Uterus (tissue), 4 donors: ENCODE measurements at regions of chr19 and their contacts with region 1.

Region 1: DNA sequence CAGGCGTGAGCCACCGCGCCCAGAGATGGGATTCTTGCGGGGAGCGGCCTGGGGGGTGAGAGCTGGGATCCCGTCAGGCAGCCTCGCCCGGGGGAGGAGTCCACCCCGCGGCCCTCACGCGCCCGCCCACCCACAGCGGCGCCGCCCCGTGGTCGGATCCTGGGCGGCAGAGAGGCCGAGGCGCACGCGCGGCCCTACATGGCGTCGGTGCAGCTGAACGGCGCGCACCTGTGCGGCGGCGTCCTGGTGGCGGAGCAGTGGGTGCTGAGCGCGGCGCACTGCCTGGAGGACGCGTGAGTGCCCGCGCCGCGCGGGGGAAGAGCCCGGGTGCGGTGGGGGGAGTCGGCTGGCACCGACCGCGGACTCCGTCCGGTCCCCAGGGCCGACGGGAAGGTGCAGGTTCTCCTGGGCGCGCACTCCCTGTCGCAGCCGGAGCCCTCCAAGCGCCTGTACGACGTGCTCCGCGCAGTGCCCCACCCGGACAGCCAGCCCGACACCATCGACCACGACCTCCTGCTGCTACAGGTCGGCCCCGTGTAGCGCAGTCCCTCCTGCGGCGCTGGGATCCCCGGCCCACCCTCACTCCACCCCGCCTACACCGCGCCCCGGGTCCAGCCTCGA is 1.1 kb downstream of the CFD start:
- DNase-seq: no peak
- H3K4me3 ChIP-seq: peak overlapping the region in 1 of 2 donors; percentile 7
- H3K27ac ChIP-seq: peak overlapping the region in 1 of 2 donors; percentile 27
- H3K4me1 ChIP-seq: peaks cover 0 to 17% of the 10 kb centered on the region in 2 donors
- H3K27me3 ChIP-seq: peaks cover 0 to 25% of the 10 kb centered on the region in 2 donors
- CTCF ChIP-seq: peak in 1 of 4 experiments; percentile 31
- POLR2A ChIP-seq: peak in 1 of 2 donors; percentile 25

Region 2: DNA sequence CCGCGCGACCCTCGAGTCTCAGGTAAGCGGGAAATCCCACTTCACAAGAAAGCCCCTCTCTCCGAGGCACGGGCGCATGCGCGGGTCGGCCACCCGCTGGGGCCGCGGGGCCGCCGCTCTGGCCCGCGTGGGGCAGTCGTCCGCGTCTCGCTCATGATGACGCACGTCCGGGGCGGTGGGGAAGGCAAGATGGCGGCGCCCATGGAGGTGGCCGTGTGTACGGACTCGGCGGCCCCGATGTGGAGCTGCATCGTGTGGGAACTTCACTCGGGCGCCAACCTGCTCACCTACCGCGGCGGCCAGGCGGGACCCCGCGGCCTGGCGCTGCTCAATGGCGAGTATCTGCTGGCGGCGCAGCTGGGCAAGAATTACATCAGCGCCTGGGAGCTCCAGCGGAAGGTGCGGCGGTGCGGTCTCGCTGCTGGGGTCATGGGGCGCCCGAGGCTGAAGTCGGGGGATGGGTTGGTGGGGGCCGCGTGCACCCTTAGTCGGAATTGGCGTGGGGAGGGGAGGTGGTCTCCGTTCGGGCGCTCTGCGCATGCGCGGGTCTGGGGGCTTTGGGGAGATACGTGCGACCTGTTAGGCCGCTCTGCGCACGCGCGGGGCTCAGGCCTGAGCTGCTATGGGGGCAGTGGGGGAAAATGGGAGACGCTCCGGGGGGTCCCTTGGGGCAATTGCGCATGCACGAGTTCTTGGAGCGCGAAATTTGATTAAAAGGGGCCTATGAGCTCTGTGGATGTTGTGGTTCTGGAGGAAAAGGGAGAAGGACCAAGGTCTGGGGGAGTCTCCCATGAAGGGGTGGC is 123.8 kb after region 1 on chr19 and contains the start of gene WDR18:
- intact Hi-C with region 1: loop called (anchors 10 kb)
- DNase-seq: peak; percentile 93
- H3K4me3 ChIP-seq: peak within 1 kb of the TSS; percentile 84 to 100
- H3K27ac ChIP-seq: peak within 1 kb of the TSS; percentile 81 to 91
- H3K4me1 ChIP-seq: peaks cover 6 to 12% of the 10 kb centered on the region in 2 donors
- H3K27me3 ChIP-seq: no peaks in the 10 kb centered on the region
- CTCF ChIP-seq: peak in 3 of 4 experiments; percentile 7 to 66 (median 63)
- POLR2A ChIP-seq: peak; percentile 43 to 75
- total RNA-seq, gene WDR18: 13.6 to 34.9 (median 17.3) TPM